Calu3 (cell line): ENCODE measurements at regions of chr3 and their contacts with region 1.

Region 1: GRCh38 chr3:168620826-168621225 is 525.1 kb upstream of the GOLIM4 start:
- DNase-seq: peak; percentile 69
- H3K4me3 Mint-ChIP-seq: no peak overlapping the region
- H3K27ac Mint-ChIP-seq: no peak overlapping the region
- H3K4me1 Mint-ChIP-seq: peaks cover 8% of the 10 kb centered on the region
- H3K27me3 Mint-ChIP-seq: no peaks in the 10 kb centered on the region
- CTCF ChIP-seq: peak; percentile 92

Region 2: GRCh38 chr3:168213920-168214319 is 406.9 kb before region 1 on chr3:
- CTCF ChIA-PET with region 1: interaction called, 25 read pairs
- intact Hi-C with region 1: loop called (anchors 1 kb)
- DNase-seq: no peak
- H3K4me3 Mint-ChIP-seq: no peak overlapping the region
- H3K27ac Mint-ChIP-seq: no peak overlapping the region
- H3K4me1 Mint-ChIP-seq: no peaks in the 10 kb centered on the region
- H3K27me3 Mint-ChIP-seq: no peaks in the 10 kb centered on the region
- CTCF ChIP-seq: no peak

Region 3: GRCh38 chr3:168511428-168512014 is 109.3 kb before region 1 on chr3:
- CTCF ChIA-PET with region 1: interaction called, 12 read pairs
- intact Hi-C with region 1: loop called (anchors 1 kb)
- DNase-seq: peak; percentile 31
- H3K4me3 Mint-ChIP-seq: no peak overlapping the region
- H3K27ac Mint-ChIP-seq: no peak overlapping the region
- H3K4me1 Mint-ChIP-seq: no peaks in the 10 kb centered on the region
- H3K27me3 Mint-ChIP-seq: no peaks in the 10 kb centered on the region
- CTCF ChIP-seq: peak; percentile 75